Activated CD8-positive, alpha-beta T cell treated with anti-CD3 and anti-CD28 coated beads, Interleukin-2, amount 10 ng/mL, durations not matched to agents 7 days and 5 days (primary cell): ENCODE measurements at regions of chr20 and their contacts with region 1.

Region 1: DNA sequence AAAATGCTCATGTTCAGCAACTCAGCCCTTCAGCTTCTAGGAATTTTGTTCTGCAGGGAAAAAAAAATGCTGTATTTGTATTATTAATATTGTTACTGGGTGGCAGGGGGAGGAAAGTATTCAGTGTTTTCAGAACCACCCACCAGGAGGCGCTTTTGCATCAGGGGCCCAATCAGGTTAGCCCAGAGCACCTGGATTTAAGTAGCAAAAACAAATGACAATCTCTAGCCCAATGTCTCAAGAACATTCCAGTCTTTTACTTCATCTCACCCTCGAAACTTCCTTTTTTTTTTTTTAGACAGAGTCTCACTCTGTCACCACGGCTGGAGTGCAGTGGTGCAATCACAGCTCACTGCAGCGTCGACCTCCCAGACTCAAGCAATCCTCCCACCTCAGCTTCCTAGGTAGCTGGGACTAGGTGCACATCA is 635 bp upstream of the C20orf203 start:
- DNase-seq: peak; percentile 85
- ATAC-seq: peak; percentile 54
- H3K4me3 Mint-ChIP-seq: no peak overlapping the region
- H3K27ac Mint-ChIP-seq: no peak overlapping the region
- H3K4me1 Mint-ChIP-seq: peaks cover 54% of the 10 kb centered on the region
- H3K27me3 Mint-ChIP-seq: no peaks in the 10 kb centered on the region

Region 2: GRCh38 chr20:32521780-32522525 is 152.4 kb before region 1 on chr20:
- CTCF ChIA-PET with region 1: interaction called, 13 read pairs
- POLR2A ChIA-PET with region 1: no interaction called
- DNase-seq: peak; percentile 71
- ATAC-seq: peak; percentile 79
- H3K4me3 Mint-ChIP-seq: no peak overlapping the region
- H3K27ac Mint-ChIP-seq: peak overlapping the region; percentile 80
- H3K4me1 Mint-ChIP-seq: peaks cover 56% of the 10 kb centered on the region
- H3K27me3 Mint-ChIP-seq: no peaks in the 10 kb centered on the region

Region 3: DNA sequence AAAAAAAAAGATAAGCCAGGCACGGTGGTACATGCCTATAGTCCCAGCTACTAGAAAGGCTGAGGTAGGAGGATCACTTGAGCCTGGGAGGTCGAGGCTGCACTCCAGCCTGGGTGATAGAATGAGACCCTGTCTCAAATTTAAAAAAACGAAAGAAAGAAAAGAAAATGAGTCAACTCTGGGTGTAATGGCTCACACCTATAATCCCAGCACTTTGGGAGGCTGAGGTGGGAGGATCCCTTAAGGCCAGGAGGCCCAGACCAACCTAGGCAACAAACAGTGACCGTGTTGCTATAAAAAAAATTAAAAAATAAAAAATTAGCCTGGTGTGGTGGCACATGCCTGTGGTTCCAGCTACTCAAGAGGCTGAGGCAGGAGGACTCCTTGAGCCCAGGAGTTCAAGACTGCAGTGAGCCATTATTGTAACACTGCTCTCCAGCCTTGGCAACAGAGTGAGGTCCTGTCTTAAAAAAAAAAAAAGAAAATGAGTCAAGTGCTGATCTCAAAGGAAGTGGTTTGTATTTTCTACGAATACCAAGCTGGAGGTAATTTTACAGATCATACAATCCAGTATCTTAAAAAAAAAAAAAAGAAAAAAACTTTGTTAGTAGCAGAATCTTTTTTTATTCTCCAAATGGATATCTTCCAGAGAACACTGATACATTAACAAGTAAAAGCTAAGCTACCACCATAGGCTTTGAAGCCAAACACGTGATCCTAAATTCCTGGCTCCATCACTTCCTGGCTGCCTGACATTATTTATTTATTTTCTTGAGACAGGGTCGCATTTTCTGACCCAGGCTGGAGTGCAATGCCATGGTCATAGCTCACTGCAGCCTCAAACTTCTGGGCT is 63.2 kb after region 1 on chr20:
- CTCF ChIA-PET with region 1: interaction called, 40 read pairs
- POLR2A ChIA-PET with region 1: interaction called, 9 read pairs
- DNase-seq: peak; percentile 71
- ATAC-seq: peak; percentile 81
- H3K4me3 Mint-ChIP-seq: peak overlapping the region; percentile 48
- H3K27ac Mint-ChIP-seq: peak overlapping the region; percentile 90
- H3K4me1 Mint-ChIP-seq: peaks cover 52% of the 10 kb centered on the region
- H3K27me3 Mint-ChIP-seq: no peaks in the 10 kb centered on the region

Region 4: DNA sequence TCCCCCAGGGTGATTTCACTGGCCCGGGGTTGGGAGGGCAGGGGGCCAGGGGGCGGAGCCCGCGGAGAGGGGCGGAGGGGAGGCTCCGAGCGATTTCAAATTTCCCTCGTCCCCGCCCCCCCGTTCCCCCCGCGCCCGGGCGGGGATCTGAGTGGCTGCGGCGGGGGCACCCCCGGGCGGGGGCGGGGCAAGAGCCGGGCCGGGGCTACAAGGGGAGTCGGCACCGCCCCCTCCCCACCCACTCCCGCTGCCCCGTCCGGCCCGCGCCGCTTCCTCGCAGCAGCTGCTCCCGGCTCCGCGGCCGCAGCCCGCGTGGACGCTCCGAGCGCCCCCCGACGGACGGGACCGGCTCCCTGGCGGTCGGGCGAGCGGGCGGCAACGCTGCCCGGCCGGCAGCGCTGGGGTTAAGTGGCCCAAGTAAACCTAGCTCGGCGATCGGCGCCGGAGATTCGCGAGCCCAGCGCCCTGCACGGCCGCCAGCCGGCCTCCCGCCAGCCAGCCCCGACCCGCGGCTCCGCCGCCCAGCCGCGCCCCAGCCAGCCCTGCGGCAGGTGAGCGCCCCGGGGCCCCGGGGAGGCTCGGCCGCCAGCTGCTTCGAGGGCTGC is 87.9 kb after region 1 on chr20 and contains the start of gene DNMT3B:
- CTCF ChIA-PET with region 1: interaction called, 30 read pairs
- POLR2A ChIA-PET with region 1: interaction called, 3 read pairs
- DNase-seq: peak; percentile 84
- ATAC-seq: peak; percentile 80
- H3K4me3 Mint-ChIP-seq: peak within 1 kb of the TSS; percentile 85
- H3K27ac Mint-ChIP-seq: peak within 1 kb of the TSS; percentile 67
- H3K4me1 Mint-ChIP-seq: peaks cover 29% of the 10 kb centered on the region
- H3K27me3 Mint-ChIP-seq: peaks cover 2% of the 10 kb centered on the region
- total RNA-seq, gene DNMT3B: 9.0 to 10.0 TPM

Region 5: GRCh38 chr20:32789896-32790750 is 115.7 kb after region 1 on chr20:
- CTCF ChIA-PET with region 1: interaction called, 21 read pairs
- POLR2A ChIA-PET with region 1: no interaction called
- DNase-seq: peak; percentile 79
- ATAC-seq: peak; percentile 80
- H3K4me3 Mint-ChIP-seq: no peak overlapping the region
- H3K27ac Mint-ChIP-seq: no peak overlapping the region
- H3K4me1 Mint-ChIP-seq: peaks cover 24% of the 10 kb centered on the region
- H3K27me3 Mint-ChIP-seq: no peaks in the 10 kb centered on the region